AG04449 (cell line): ENCODE measurements at regions of chr4 and their contacts with region 1.

Region 1: GRCh38 chr4:152972821-152973628 is 36.9 kb downstream of the FHDC1 start:
- DNase-seq: peak; percentile 90
- H3K4me3 ChIP-seq: no peak overlapping the region; the same call in 1 of the 2 replicates
- CTCF ChIP-seq: no peak

Region 2: DNA sequence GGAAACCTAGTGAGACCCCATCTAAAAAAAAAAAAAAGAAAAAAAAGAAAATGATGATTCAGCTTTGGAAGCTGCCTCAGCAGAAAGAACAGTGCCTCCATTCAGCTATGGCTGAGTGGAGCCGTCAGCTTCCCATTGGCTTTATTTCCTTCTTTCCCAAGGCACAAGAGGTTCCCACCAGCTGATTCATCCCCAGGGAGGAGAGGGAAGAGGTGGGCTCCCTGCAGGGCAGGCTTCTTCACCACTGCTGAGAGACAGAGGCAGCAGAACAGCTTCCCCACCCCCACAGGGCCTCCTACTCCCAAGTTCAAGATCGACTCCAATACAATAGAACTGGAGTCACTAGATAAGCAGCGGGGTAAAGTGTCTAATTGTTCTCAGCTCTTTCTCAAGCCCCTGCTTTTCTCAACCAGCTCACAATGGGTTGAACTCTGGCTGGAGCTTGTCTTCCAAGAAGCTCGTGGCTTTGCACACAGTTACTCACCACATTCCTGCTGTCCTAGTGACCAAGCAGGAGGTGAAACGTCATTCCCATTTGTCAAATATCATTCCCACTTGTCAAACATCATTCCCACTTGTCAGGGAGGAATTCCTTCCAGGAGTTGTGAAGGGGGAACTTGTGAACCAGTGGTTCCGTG is 10.9 kb after region 1 on chr4:
- CTCF ChIA-PET with region 1: interaction called, 11 read pairs
- POLR2A ChIA-PET with region 1: interaction called, 10 read pairs
- DNase-seq: no peak
- H3K4me3 ChIP-seq: no peak overlapping the region
- CTCF ChIP-seq: no peak

Region 3: GRCh38 chr4:152994038-152994437 is 21.0 kb after region 1 on chr4:
- CTCF ChIA-PET with region 1: no interaction called
- POLR2A ChIA-PET with region 1: no interaction called
- DNase-seq: no peak
- H3K4me3 ChIP-seq: no peak overlapping the region
- CTCF ChIP-seq: no peak